ENCODE measurements at regions of chr12 and their contacts with region 1.

Region 1: DNA sequence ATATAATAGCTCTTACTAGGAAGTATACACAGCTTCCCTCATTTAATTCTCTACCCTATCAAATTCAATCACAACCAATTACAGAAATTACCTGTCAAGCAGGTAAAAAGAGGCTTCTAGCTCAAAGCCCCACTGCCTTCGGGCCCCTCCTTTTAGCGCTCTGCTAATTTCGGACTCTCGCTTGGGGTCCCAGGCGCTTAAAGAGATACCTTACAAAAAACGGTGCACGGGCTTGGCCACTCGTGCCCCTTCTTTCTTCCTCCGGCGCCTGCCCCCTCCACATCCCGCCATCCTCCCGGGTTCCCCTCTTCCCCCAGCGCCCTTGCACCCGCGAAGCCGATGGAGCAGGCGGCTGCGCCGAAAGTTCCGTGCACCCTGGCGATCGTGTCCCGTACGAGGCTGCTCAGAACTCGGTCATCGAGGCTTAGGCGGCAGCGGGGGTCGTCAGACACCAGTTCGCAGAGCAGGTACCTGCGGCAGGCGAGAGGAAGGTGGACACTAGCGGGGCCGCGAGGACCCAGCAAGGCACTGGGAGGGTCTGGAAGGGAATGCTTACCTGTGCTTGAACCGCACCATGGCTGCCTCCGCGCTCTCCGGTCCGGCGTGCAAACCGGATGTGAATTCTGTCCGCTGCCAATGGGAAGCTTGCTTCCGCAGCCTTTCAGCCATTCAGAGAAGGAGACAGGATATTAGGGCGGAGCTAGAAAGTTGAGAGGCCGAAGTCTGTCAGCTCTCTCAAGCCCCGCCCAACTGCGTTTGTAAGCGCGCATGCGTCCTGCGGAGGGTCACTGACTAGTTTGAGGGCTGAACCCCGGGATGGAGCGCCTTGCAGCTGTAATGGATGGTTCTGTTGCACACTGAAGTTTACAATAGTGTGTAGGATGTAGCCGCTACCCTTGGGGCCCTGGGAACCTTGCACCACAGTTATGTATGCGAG is at the start of gene POP5:
- DNase-seq: peak; percentile 97
- H3K4me3 ChIP-seq: peak within 1 kb of the TSS; percentile 48 to 98 (median 79)
- H3K27ac ChIP-seq: no peak within 1 kb of the TSS
- H3K4me1 ChIP-seq: peaks cover 13% of the 10 kb centered on the region
- H3K27me3 ChIP-seq: no peaks in the 10 kb centered on the region
- CTCF ChIP-seq: no peak
- POLR2A ChIP-seq: peak; percentile 71
- total RNA-seq, gene POP5: 25.7 and 30.5 TPM in 2 replicates

Region 2: DNA sequence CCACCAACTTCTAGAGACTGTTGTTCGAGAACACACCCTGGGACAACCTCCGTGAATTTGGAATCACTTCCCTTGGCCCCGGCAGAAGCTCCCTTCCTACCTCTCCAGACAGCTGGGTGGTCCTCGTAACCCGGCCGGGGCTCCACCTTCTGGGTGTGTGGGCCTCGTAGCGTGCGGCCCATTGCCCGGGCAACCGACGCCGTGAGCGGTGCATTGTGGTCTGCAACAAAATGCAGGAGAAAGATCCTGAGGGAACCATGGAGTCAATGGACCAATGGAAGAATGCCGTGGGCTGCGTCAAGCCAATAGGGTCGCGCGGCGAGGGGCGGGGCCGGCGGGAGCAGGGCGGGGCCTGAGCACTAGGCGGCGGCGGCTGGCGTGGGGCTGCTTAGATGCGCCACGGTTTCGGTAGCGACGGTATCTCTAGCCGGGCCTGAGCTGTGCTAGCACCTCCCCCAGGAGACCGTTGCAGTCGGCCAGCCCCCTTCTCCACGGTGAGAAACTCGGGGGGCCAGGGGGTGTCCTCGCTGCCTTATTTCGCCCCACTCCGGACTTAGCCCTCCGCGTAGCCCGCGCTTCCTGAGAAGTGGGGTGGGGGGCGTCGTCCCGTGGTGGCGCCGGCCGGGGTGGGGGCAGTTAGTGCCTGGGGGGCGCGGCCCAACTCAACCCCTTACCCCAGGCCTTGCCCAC is 85.2 kb before region 1 on chr12 and contains the start of gene DYNLL1:
- CTCF ChIA-PET with region 1: no interaction called
- POLR2A ChIA-PET with region 1: no interaction called
- dilution Hi-C with region 1: no loop called
- intact Hi-C with region 1: loop called (anchors 2 kb)
- DNase-seq: peak; percentile 98
- H3K4me3 ChIP-seq: peak within 1 kb of the TSS; percentile 64 to 98 (median 90)
- H3K27ac ChIP-seq: no peak within 1 kb of the TSS
- H3K4me1 ChIP-seq: peaks cover 15% of the 10 kb centered on the region
- H3K27me3 ChIP-seq: no peaks in the 10 kb centered on the region
- CTCF ChIP-seq: no peak
- POLR2A ChIP-seq: peak; percentile 99
- total RNA-seq, gene DYNLL1: 469 TPM in 2 replicates

Region 3: DNA sequence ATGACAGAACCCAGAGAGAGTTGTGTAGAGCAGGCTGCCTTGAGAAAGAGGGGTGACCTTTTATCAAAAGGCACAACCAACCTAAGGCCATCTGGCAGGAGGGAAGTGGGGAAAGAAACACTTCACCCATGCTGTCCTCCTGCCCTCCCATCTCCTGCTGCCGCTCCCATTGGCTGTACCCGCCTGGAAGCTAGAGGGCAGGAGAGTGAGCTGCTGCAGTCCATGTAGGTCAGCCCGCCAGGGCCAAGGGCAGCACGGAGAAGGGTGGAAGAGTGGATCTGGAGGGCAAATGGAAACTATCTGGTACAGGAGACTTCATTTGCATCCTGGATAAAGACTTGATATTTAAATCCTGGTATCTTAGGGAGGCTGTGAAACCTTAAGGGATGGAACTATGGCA is 47.9 kb after region 1 on chr12:
- CTCF ChIA-PET with region 1: no interaction called
- POLR2A ChIA-PET with region 1: no interaction called
- dilution Hi-C with region 1: no loop called
- intact Hi-C with region 1: no loop called
- DNase-seq: no peak
- H3K4me3 ChIP-seq: no peak overlapping the region
- H3K27ac ChIP-seq: no peak overlapping the region
- H3K4me1 ChIP-seq: no peaks in the 10 kb centered on the region
- H3K27me3 ChIP-seq: peaks cover 0 to 1% of the 10 kb centered on the region in 2 experiments
- CTCF ChIP-seq: no peak
- POLR2A ChIP-seq: no peak

Region 4: GRCh38 chr12:120686690-120687577 is 105.9 kb after region 1 on chr12 and contains the start of gene MLEC:
- CTCF ChIA-PET with region 1: no interaction called
- POLR2A ChIA-PET with region 1: no interaction called
- dilution Hi-C with region 1: no loop called
- intact Hi-C with region 1: loop called (anchors 1 kb)
- DNase-seq: peak; percentile 97
- H3K4me3 ChIP-seq: peak within 1 kb of the TSS; percentile 77 to 88 (median 80)
- H3K27ac ChIP-seq: peak within 1 kb of the TSS; percentile 86
- H3K4me1 ChIP-seq: peaks cover 27% of the 10 kb centered on the region
- H3K27me3 ChIP-seq: no peaks in the 10 kb centered on the region
- CTCF ChIP-seq: no peak
- POLR2A ChIP-seq: peak; percentile 72
- total RNA-seq, gene MLEC: 132 and 144 TPM in 2 replicates

Region 5: GRCh38 chr12:120725659-120726509 is 144.8 kb after region 1 on chr12 and contains the start of gene ACADS:
- CTCF ChIA-PET with region 1: interaction called, 3 read pairs
- POLR2A ChIA-PET with region 1: no interaction called
- dilution Hi-C with region 1: no loop called
- intact Hi-C with region 1: loop called (anchors 5 kb)
- DNase-seq: peak; percentile 82
- H3K4me3 ChIP-seq: peak within 1 kb of the TSS; percentile 43 to 63 (median 56)
- H3K27ac ChIP-seq: peak within 1 kb of the TSS; percentile 21
- H3K4me1 ChIP-seq: peaks cover 10% of the 10 kb centered on the region
- H3K27me3 ChIP-seq: no peaks in the 10 kb centered on the region
- CTCF ChIP-seq: no peak
- POLR2A ChIP-seq: peak; percentile 47
- total RNA-seq, gene ACADS: 8.2 and 9.5 TPM in 2 replicates

Region 6: GRCh38 chr12:121095544-121096198 is 514.6 kb after region 1 on chr12:
- CTCF ChIA-PET with region 1: no interaction called
- POLR2A ChIA-PET with region 1: no interaction called
- dilution Hi-C with region 1: no loop called
- intact Hi-C with region 1: loop called (anchors 5 kb)
- DNase-seq: peak; percentile 83
- H3K4me3 ChIP-seq: peak overlapping the region in 2 of 3 experiments; percentile 6 to 11
- H3K27ac ChIP-seq: peak overlapping the region; percentile 82
- H3K4me1 ChIP-seq: peaks cover 13% of the 10 kb centered on the region
- H3K27me3 ChIP-seq: no peaks in the 10 kb centered on the region
- CTCF ChIP-seq: peak; percentile 76 to 97
- POLR2A ChIP-seq: no peak

Region 7: GRCh38 chr12:121314431-121314830 is 733.4 kb after region 1 on chr12:
- CTCF ChIA-PET with region 1: no interaction called
- POLR2A ChIA-PET with region 1: no interaction called
- dilution Hi-C with region 1: no loop called
- intact Hi-C with region 1: no loop called
- DNase-seq: no peak
- H3K4me3 ChIP-seq: no peak overlapping the region
- H3K27ac ChIP-seq: no peak overlapping the region
- H3K4me1 ChIP-seq: no peaks in the 10 kb centered on the region
- H3K27me3 ChIP-seq: no peaks in the 10 kb centered on the region
- CTCF ChIP-seq: no peak
- POLR2A ChIP-seq: no peak